PC-9 (cell line): ENCODE measurements at regions of chr3 and their contacts with region 1.

Region 1: GRCh38 chr3:23923786-23924185 is 6.9 kb downstream of the RPL15 start:
- DNase-seq: no peak
- H3K4me3 ChIP-seq: no peak overlapping the region
- H3K27ac ChIP-seq: no peak overlapping the region
- H3K4me1 ChIP-seq: peaks cover 35% of the 10 kb centered on the region
- H3K27me3 ChIP-seq: no peaks in the 10 kb centered on the region
- CTCF ChIP-seq: no peak

Region 2: GRCh38 chr3:23959135-23959900 is 35.5 kb after region 1 on chr3:
- CTCF ChIA-PET with region 1: no interaction called
- POLR2A ChIA-PET with region 1: no interaction called
- intact Hi-C with region 1: loop called (anchors 1 kb)
- DNase-seq: peak; percentile 65 to 97
- H3K4me3 ChIP-seq: no peak overlapping the region
- H3K27ac ChIP-seq: peak overlapping the region; percentile 94
- H3K4me1 ChIP-seq: peaks cover 49% of the 10 kb centered on the region
- H3K27me3 ChIP-seq: no peaks in the 10 kb centered on the region
- CTCF ChIP-seq: no peak

Region 3: DNA sequence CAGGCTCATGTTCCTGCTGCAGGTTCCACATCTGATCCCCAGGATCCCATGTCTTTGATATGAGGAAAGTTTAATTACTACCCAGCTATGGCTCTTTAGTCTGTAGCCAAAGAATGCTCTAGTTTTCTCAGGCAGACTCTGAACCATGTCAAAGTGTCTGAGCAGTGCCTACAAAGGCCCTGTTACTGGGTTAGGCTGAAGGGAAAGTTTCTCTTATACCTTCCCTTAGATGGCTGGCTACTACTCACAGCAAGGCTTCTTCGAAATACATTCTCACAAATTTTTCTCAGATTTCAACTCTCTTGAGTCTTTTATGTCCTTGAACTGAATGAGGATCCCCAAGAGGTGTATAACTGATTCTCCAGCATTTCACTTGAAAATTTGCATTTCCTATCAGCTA is 123.7 kb after region 1 on chr3:
- CTCF ChIA-PET with region 1: no interaction called
- POLR2A ChIA-PET with region 1: no interaction called
- intact Hi-C with region 1: no loop called
- DNase-seq: no peak
- H3K4me3 ChIP-seq: no peak overlapping the region
- H3K27ac ChIP-seq: peak overlapping the region; percentile 70
- H3K4me1 ChIP-seq: peaks cover 16% of the 10 kb centered on the region
- H3K27me3 ChIP-seq: no peaks in the 10 kb centered on the region
- CTCF ChIP-seq: no peak

Region 4: DNA sequence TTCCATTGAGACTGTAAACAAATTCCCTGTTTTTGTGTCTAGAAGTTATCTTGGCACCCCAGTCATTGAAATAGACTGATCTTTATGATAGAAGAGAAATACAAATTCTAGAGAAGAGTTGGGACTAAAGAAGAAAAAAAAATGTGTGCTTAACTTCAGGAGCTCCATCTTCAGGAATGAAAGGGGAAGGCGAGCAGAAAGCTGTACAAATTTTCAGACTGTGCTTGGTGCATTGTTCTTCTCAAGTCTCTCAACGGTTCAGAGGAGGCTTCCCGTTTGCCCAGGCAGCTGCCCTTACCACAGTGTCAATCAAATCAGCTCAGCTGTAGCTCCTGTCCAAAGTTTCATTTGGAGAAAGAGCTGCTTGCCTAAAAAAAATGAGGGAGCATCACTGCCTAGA is 1907.8 kb after region 1 on chr3:
- CTCF ChIA-PET with region 1: no interaction called
- POLR2A ChIA-PET with region 1: interaction called, 11 read pairs
- intact Hi-C with region 1: no loop called
- DNase-seq: no peak
- H3K4me3 ChIP-seq: no peak overlapping the region
- H3K27ac ChIP-seq: no peak overlapping the region
- H3K4me1 ChIP-seq: no peaks in the 10 kb centered on the region
- H3K27me3 ChIP-seq: no peaks in the 10 kb centered on the region
- CTCF ChIP-seq: no peak; the same call in 1 of the 2 replicates